Endothelial cell of umbilical vein (primary cell): ENCODE measurements at regions of chr17 and their contacts with region 1.

Region 1: DNA sequence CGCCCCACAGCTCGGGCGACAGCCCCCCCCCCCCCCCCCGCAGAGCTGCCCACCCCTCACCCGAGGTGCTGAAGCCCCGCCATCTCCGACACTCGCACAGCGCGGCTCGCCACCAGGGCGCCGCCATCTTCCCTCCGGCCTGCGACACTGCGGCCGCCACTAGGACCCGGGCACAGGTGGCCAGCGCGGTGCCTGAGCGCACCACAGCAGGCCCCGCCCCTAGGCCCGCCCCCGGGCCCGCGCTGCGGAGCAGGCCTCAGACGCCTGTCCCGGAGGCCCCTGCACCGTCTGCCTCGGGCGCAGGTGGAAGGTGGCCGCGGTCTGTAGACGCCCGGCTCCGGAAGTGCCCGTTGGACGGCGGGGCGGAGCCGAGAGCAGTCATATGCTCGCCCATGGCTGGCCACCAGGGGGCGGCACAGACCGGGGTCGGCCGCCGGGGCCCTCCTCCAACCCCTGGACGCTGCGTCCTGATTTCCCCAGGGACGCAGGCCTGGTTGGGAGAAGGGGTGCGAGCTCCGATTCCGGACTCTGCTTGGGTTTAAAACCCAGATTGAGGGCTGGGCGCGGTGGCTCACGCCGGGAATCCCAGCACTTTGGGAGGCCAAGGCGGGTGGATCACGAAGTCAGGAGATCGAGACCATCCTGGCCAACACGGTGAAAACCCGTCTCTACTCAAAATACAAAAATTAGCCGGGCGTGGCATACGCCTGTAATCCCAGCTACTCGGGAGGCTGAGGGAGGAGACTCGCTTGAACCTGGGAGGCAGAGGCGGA is at the start of gene MRPL38:
- DNase-seq: peak; percentile 96
- H3K4me3 ChIP-seq: peak within 1 kb of the TSS; percentile 61 to 90 (median 77)
- H3K27ac ChIP-seq: peak within 1 kb of the TSS; percentile 74
- H3K4me1 ChIP-seq: peaks cover 14% of the 10 kb centered on the region
- H3K27me3 ChIP-seq: no peaks in the 10 kb centered on the region
- CTCF ChIP-seq: peak; percentile 97 to 99
- POLR2A ChIP-seq: no peak
- total RNA-seq, gene MRPL38: 93.8 and 94.4 TPM in 2 replicates

Region 2: DNA sequence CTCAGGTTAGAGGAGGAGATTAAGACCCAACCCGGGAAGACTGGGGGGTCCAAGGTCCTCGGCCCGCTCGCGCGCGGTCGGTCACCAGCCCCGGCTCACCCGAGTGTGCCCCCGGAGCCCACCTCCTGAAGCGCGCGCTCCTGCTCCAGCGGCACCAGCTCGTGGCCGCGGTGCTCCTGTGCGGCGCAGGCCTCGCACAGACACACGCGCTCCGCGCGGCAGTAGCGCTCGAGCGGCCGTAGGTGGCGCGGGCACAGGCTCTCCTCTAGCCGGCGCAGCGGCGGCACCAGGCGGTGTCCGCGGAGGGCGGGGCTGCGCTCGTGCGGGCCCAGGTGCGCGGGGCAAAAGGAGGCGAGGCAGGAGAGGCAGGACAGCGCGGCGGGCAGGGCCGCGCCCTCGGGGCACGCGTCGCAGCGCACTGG is 27.2 kb before region 1 on chr17:
- CTCF ChIA-PET with region 1: interaction called, 13 read pairs
- POLR2A ChIA-PET with region 1: no interaction called
- dilution Hi-C with region 1: no loop called
- intact Hi-C with region 1: loop called (anchors 2 kb)
- DNase-seq: peak; percentile 74
- H3K4me3 ChIP-seq: peak overlapping the region; percentile 1 to 67 (median 66)
- H3K27ac ChIP-seq: peak overlapping the region; percentile 70
- H3K4me1 ChIP-seq: peaks cover 34% of the 10 kb centered on the region
- H3K27me3 ChIP-seq: no peaks in the 10 kb centered on the region
- CTCF ChIP-seq: peak; percentile 33 to 66
- POLR2A ChIP-seq: no peak

Region 3: GRCh38 chr17:75940724-75941441 is 35.9 kb after region 1 on chr17 and contains the start of gene FBF1:
- CTCF ChIA-PET with region 1: interaction called, 10 read pairs
- POLR2A ChIA-PET with region 1: interaction called, 3 read pairs
- dilution Hi-C with region 1: no loop called
- intact Hi-C with region 1: loop called (anchors 1 kb)
- DNase-seq: peak; percentile 96
- H3K4me3 ChIP-seq: peak within 1 kb of the TSS; percentile 40 to 82 (median 79)
- H3K27ac ChIP-seq: peak within 1 kb of the TSS; percentile 23
- H3K4me1 ChIP-seq: peaks cover 6% of the 10 kb centered on the region
- H3K27me3 ChIP-seq: no peaks in the 10 kb centered on the region
- CTCF ChIP-seq: peak in 1 of 2 donors; percentile 4
- POLR2A ChIP-seq: peak; percentile 90
- total RNA-seq, gene FBF1: 8.9 and 9.4 TPM in 2 replicates

Region 4: GRCh38 chr17:75978938-75979704 is 74.2 kb after region 1 on chr17 and contains the starts of genes ACOX1 and TEN1:
- CTCF ChIA-PET with region 1: no interaction called
- POLR2A ChIA-PET with region 1: no interaction called
- dilution Hi-C with region 1: no loop called
- intact Hi-C with region 1: loop called (anchors 1 kb)
- DNase-seq: peak; percentile 95
- H3K4me3 ChIP-seq: peak within 1 kb of the TSS; percentile 65 to 77 (median 70)
- H3K27ac ChIP-seq: peak within 1 kb of the TSS; percentile 94
- H3K4me1 ChIP-seq: peaks cover 19% of the 10 kb centered on the region
- H3K27me3 ChIP-seq: no peaks in the 10 kb centered on the region
- CTCF ChIP-seq: peak in 1 of 2 donors; percentile 38
- POLR2A ChIP-seq: peak; percentile 61
- total RNA-seq, gene ACOX1: 45.1 and 47.0 TPM in 2 replicates
- total RNA-seq, gene TEN1: 14.3 and 18.8 TPM in 2 replicates

Region 5: GRCh38 chr17:76264755-76265596 is 360.0 kb after region 1 on chr17 and contains the start of gene UBALD2:
- CTCF ChIA-PET with region 1: no interaction called
- POLR2A ChIA-PET with region 1: no interaction called
- dilution Hi-C with region 1: no loop called
- intact Hi-C with region 1: loop called (anchors 1 kb)
- DNase-seq: peak; percentile 100
- H3K4me3 ChIP-seq: peak within 1 kb of the TSS; percentile 78 to 84 (median 80)
- H3K27ac ChIP-seq: peak within 1 kb of the TSS; percentile 97
- H3K4me1 ChIP-seq: peaks cover 54% of the 10 kb centered on the region
- H3K27me3 ChIP-seq: no peaks in the 10 kb centered on the region
- CTCF ChIP-seq: no peak
- POLR2A ChIP-seq: peak; percentile 42
- total RNA-seq, gene UBALD2: 70.9 and 75.2 TPM in 2 replicates